Activated T-helper 2 cell treated with anti-CD3 and anti-CD28 coated beads, Interferon-gamma antibody, Interleukin-2, Interleukin-4, amounts not matched to agents 10 μg/mL and 5 μg/mL and 100 μg/mL, durations not matched to agents 14 hours and 24 hours and 36 hours (primary cell): ENCODE measurements at regions of chr14 and their contacts with region 1.

Region 1: DNA sequence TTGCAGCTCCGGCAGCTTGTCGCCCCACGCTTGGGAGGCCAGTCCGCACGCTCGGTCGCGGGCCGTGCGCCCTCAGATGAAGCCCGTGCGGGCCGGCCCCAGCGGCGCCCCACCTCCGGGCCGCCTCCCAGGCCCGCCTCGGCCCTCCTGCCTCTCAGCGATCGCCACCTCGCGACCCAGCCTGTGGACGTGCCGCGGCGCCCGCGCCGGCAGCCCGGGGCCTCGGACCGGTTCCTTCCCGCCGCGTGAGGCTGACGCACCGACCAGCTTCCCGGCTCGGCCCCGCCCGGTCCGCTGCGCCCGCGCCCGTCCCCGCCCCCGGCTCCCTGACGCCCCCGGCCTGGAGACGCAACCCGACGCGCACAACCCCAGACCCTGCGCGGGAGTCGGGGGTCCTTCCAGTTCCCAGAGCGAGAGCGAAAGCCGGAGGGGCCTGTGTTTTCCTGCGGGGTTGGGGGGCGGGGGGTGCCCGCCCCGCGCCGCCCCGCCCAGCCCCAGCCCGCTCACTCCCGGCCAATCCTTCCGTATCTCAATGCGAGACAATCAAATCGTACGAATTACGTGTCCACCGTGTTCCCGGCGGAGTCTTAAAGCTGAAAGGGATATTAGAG is at the start of gene ERO1A:
- DNase-seq: peak; percentile 65
- H3K4me3 Mint-ChIP-seq: peak within 1 kb of the TSS; percentile 98
- H3K27ac Mint-ChIP-seq: peak within 1 kb of the TSS; percentile 99
- H3K4me1 Mint-ChIP-seq: peaks cover 29% of the 10 kb centered on the region
- H3K27me3 Mint-ChIP-seq: no peaks in the 10 kb centered on the region
- total RNA-seq, gene ERO1A: 219 and 226 TPM in 2 replicates

Region 2: DNA sequence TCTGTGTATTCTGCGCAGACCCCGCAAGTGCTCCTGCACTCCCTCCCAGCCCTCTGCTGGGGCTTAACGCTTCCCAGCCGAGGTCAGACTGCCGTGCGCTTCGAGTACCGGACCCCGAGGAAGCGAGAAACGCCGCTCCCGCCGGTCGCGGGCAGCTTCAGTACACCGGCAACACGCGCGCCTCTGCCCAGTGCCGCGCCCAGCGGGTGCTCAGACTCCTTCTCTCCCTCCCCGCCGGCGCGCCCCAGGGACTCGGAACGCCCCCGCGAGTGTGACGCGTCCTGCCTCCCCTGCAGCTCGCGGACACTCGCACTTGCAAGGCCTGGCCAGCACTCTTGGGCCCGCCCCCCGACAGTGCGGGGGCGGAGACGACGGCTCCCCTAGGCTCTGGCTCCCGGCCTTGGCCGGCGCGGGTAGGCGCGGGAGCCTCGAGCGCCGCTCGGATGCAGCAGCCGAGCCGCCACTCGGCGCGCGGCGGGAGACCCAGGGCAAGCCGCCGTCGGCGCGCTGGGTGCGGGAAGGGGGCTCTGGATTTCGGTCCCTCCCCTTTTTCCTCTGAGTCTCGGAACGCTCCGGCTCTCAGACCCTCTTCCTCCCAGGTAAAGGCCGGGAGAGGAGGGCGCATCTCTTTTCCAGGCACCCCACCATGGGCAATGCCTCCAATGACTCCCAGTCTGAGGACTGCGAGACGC is 381.5 kb before region 1 on chr14 and contains the start of gene PTGER2:
- intact Hi-C with region 1: loop called (anchors 10 kb)
- DNase-seq: peak; percentile 87
- H3K4me3 Mint-ChIP-seq: peak within 1 kb of the TSS; percentile 100
- H3K27ac Mint-ChIP-seq: peak within 1 kb of the TSS; percentile 98
- H3K4me1 Mint-ChIP-seq: peaks cover 59% of the 10 kb centered on the region
- H3K27me3 Mint-ChIP-seq: no peaks in the 10 kb centered on the region
- total RNA-seq, gene PTGER2: 53.3 and 54.1 TPM in 2 replicates

Region 3: DNA sequence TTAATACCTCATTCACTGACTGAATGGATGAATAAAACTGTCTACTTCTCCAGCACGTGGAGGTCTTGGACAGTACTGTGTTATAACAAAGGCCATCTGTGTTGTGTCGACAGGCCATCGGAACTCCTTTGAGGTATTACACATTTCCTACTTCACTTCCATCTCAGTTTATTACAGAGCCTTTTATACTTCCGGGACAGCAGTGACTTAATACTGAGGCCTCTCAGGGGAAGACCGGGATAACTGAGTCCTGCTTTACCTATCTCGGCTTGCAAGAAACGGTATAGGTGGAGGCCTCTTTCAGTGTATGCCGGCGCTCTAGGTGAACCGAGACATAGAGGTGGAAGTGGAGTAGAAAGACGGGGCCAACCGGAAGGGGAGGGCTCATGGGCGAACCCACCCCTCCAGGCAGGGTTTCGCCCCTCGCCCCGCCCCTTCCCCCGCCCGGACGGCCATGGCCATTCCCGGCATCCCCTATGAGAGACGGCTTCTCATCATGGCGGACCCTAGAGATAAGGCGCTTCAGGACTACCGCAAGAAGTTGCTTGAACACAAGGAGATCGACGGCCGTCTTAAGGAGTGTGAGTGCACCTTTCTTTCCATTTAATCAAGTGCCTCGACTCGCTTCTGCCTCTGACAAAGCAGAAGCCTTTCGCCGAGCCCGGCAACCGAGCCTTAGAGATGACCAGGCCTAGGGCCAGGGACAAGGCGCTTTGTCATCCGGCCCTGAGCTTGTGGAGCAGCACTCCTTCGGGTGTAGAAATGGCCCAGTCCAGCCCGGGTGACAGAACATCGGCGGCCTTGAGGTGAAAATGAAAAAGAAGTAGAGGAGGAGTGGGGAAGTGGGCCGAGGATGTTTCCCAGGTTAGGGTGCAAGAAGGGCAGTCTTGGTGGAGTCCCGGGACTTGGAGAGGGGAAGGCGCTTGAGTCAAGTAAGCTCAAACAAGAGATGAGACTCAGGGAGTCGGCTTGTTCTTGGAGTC is 11.4 kb after region 1 on chr14 and contains the start of gene PSMC6:
- intact Hi-C with region 1: loop called (anchors 1 kb)
- DNase-seq: peak; percentile 84
- H3K4me3 Mint-ChIP-seq: peak within 1 kb of the TSS; percentile 99
- H3K27ac Mint-ChIP-seq: peak within 1 kb of the TSS; percentile 93
- H3K4me1 Mint-ChIP-seq: peaks cover 39% of the 10 kb centered on the region
- H3K27me3 Mint-ChIP-seq: no peaks in the 10 kb centered on the region
- total RNA-seq, gene PSMC6: 144 and 155 TPM in 2 replicates